Activated T-helper 1 cell treated with anti-CD3 and anti-CD28 coated beads, Interleukin-12 subunit alpha, Interleukin-12 subunit beta, Interleukin-2, Interleukin-4 antibody, amounts not matched to agents 30 ng/mL and 10 ng/mL and 1 ng/mL, durations not matched to agents 14 hours and 24 hours and 36 hours (primary cell): ENCODE measurements at regions of chr20 and their contacts with region 1.

Region 1: GRCh38 chr20:62121776-62122631 is at the start of gene LSM14B:
- DNase-seq: peak; percentile 95
- H3K4me3 Mint-ChIP-seq: peak within 1 kb of the TSS; percentile 90
- H3K27ac Mint-ChIP-seq: peak within 1 kb of the TSS; percentile 94
- H3K4me1 Mint-ChIP-seq: peaks cover 32% of the 10 kb centered on the region
- H3K27me3 Mint-ChIP-seq: no peaks in the 10 kb centered on the region
- total RNA-seq, gene LSM14B: 39.6 and 43.2 TPM in 2 replicates

Region 2: DNA sequence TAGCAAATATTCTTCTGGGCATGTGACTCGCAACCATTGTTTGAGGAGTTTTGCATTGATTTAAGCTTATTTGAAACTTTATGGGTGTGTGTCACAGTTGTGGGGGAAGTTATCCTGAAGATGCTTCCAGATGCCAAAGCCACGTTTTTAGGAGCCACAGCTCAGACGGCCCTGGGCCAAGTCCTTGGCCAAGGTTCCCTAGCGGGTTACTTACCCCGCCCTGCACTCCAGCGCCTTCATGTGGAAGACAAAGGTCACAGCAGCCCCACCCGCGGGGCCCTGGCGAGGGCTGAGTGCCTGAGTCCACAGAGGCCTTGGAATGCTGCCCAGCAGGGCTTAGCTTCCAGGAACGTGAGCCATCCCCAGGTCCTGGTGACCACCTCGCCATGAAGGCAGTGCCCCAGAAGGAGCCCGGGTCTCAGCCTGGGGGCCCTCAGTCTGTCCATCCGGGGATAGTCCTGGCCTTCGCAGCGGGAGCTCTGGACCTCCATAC is 561.6 kb before region 1 on chr20:
- intact Hi-C with region 1: no loop called
- DNase-seq: no peak
- H3K4me3 Mint-ChIP-seq: no peak overlapping the region
- H3K27ac Mint-ChIP-seq: no peak overlapping the region
- H3K4me1 Mint-ChIP-seq: no peaks in the 10 kb centered on the region
- H3K27me3 Mint-ChIP-seq: no peaks in the 10 kb centered on the region

Region 3: DNA sequence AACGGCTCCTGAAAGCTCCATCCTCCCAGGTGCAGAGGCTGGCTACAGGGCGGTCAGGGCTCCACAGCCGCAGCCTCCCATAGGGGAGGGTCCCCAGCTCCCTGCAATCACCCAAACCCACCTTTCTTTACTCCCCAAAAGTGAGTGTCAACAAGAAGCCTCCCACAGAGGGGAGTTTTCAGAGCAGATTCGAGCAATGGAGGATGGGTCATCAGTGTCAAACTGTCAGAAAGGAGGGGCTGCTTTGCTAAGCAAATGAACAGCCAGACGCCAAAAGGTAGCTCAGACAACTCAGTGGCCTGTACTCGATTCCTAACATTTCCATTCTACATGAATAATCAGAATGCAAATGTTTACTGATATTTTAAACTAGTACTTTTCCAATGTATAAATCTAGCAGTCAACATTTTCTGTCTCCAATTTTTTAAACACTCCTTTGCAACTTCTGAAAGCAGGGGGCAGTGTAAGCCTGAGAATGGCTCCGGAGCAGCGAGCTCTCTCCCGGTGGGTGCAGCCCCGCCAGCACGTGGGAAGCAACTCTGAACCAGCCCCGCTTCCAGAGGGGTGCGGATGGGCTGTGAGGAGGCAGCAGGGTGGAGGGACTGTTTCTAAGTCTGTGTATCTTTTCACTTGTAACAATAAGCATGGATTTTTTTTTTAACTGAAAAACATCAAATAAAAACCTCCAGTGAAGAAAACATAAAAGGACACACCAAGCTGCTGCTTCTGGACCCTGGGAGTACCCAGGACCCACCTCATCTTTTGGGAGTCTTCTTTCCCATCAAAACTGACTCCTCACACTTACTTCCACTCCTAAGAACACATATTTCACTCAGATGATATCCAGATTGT is 111.2 kb before region 1 on chr20:
- intact Hi-C with region 1: loop called (anchors 1 kb)
- DNase-seq: peak; percentile 34
- H3K4me3 Mint-ChIP-seq: no peak overlapping the region
- H3K27ac Mint-ChIP-seq: no peak overlapping the region
- H3K4me1 Mint-ChIP-seq: peaks cover 8% of the 10 kb centered on the region
- H3K27me3 Mint-ChIP-seq: no peaks in the 10 kb centered on the region

Region 4: DNA sequence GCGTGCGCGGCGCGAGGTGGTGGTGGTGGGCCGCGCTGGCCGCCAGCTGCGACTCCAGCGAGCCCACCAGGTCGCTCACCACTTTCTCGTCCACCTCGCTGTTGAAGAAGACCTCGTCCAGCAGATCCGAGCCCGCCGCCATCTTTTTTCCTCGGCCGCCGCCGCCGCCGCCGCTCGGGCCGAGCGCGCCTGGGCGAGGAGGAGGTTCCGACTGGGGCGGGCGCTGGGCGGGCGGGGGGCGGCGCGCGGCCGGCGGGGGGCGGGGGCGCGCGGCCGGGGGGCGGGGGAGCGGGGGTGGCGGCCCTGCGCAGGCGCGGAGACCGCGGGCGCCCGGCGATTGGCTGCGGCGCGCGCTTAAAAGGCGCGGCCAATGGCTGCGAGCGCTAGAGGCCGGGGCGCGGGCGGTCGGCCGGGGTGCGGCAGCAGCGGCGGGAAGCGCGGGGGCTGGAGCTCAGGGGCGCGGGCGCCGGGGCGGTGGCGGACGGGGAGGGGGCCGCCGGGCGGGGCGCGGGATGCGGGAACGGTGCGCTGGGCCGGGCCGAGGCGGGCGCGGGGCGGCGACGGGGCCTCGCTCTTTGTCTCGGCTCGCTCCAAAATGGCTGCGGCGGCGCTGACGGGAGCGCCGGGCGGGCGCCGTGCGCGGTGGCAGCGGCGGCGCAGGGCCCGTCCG is 56.2 kb before region 1 on chr20 and contains the start of gene TAF4:
- intact Hi-C with region 1: loop called (anchors 1 kb)
- DNase-seq: peak; percentile 80
- H3K4me3 Mint-ChIP-seq: peak within 1 kb of the TSS; percentile 84
- H3K27ac Mint-ChIP-seq: peak within 1 kb of the TSS; percentile 84
- H3K4me1 Mint-ChIP-seq: peaks cover 42% of the 10 kb centered on the region
- H3K27me3 Mint-ChIP-seq: peaks cover 6% of the 10 kb centered on the region
- total RNA-seq, gene TAF4: 26.3 and 28.3 TPM in 2 replicates

Region 5: DNA sequence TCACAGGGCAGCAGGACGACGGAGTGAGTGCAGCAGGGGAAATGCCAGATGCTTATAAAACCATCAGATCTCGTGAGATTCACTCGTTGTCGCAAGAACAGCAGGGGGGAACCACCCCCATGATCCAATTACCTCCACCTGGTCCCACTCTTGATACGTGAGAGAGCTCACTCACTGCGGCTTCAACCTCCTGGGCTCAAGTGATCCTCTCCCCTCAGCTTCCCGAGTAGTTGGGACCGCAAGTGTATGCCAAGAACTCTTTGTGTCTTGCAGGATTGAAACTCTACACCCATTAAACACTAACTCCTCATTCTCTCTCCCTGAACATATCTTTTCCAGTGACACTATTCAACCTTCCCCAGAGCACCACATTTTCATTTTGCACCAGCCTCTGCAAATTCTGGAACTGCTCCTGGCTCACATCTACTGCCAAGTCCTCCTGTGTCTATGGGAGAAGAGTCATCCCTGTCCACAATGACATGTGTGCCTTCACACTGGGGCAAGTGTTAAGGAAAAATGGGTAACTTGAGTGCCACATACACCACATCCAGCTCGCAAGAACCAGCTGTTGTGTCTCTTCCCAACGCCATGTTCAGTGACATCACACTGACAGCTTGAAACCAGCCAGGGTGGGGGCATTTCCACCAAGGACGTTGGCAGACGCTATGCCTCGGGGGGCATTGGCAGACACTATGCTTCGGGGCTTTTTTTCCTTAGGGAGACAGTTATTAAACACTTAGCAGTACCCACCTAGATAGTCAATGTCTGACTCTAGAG is 41.6 kb before region 1 on chr20:
- intact Hi-C with region 1: no loop called
- DNase-seq: no peak
- H3K4me3 Mint-ChIP-seq: no peak overlapping the region
- H3K27ac Mint-ChIP-seq: no peak overlapping the region
- H3K4me1 Mint-ChIP-seq: no peaks in the 10 kb centered on the region
- H3K27me3 Mint-ChIP-seq: no peaks in the 10 kb centered on the region

Region 6: DNA sequence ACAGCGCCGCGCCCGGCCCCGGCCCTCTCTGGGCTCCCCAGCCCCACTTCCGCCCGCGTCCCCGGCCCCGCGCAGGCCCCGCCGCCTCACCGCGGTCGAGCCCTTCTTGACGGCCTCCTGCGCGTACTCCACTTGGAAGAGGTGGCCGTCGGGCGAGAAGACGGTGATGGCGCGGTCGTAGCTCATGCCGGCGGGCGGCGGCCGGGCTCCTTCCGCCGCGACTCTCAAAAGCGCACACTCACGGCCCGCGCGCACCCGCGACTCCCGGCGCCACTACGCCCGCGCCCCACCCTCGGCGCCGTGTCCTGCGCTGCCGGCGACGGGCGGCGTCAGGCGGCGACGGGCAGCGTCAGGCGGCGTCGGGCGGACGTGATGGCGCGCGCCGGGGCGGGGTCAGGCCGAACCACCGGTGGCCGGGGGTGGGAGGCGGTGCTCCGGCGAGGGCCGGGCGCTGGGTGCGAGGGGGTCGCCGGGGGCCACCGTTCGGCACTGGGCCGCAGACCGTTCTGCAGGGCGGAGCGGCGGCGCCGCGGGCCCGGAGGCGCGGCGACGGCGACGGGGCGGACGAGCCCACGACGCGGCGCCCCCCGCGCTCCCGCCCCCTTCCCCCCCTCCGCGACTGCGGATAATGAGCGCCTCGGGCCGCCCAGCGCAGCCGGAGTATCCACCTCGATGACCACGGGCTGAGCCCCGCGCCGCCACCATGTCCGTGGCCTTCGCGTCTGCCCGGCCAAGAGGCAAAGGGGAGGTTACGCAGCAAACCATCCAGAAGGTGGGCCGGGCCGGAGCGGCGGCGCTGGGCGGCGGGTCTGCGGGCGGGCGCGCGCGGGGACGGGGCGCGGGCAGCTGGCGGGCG is 21.3 kb after region 1 on chr20 and contains the starts of genes PSMA7 and SS18L1:
- intact Hi-C with region 1: loop called (anchors 1 kb)
- DNase-seq: peak; percentile 84
- H3K4me3 Mint-ChIP-seq: peak within 1 kb of the TSS; percentile 90
- H3K27ac Mint-ChIP-seq: peak within 1 kb of the TSS; percentile 91
- H3K4me1 Mint-ChIP-seq: peaks cover 39% of the 10 kb centered on the region
- H3K27me3 Mint-ChIP-seq: no peaks in the 10 kb centered on the region
- total RNA-seq, gene PSMA7: 444 and 450 TPM in 2 replicates
- total RNA-seq, gene SS18L1: 24.3 and 29.4 TPM in 2 replicates

Region 7: DNA sequence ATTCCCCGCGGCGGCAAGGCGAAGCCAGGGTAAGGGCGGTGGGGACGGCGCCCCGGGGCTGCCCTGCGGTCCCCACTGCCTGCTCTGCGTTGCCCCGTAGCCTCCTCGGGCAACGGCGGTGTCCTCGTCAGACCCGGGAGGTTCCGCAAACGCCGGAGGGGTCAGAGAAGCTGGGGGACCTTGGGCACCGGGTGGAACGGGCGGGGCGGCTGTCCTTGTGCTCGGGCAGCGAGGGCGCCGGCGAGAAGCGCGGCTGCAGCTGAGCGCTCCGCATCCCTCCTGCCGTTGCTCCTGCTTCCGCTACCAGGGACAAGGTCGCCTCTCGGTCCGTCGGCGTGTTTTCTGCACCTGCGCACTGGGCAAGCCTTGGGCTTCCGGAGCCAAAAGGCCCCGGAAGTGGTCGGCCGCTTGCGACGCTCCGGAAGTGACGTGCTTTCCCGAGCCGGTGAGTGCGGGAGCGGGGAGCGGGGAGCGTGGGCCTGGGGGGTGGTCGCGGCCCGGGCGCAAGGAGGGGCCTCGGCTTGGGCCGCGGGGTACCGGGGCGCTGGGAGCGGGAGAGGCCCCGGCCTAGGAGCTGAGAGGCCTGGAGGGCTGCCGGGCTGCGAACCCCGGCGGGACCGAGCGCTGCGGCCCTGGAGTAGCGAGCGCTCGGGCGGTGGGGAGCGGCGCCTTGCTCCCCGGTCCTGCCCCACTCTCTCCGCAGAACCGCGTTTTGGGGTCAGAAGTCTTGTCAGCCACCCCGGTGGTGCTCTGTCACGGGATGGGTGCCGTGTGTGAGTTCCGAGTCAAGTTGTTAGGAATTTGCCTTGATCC is 60.8 kb after region 1 on chr20 and contains the start of gene MTG2:
- intact Hi-C with region 1: loop called (anchors 1 kb)
- DNase-seq: peak; percentile 95
- H3K4me3 Mint-ChIP-seq: peak within 1 kb of the TSS; percentile 92
- H3K27ac Mint-ChIP-seq: peak within 1 kb of the TSS; percentile 93
- H3K4me1 Mint-ChIP-seq: peaks cover 39% of the 10 kb centered on the region
- H3K27me3 Mint-ChIP-seq: no peaks in the 10 kb centered on the region
- total RNA-seq, gene MTG2: 45.4 and 46.3 TPM in 2 replicates

Region 8: GRCh38 chr20:62232196-62233045 is 110.4 kb after region 1 on chr20:
- intact Hi-C with region 1: no loop called
- DNase-seq: no peak
- H3K4me3 Mint-ChIP-seq: no peak overlapping the region
- H3K27ac Mint-ChIP-seq: no peak overlapping the region
- H3K4me1 Mint-ChIP-seq: no peaks in the 10 kb centered on the region
- H3K27me3 Mint-ChIP-seq: no peaks in the 10 kb centered on the region

Region 9: DNA sequence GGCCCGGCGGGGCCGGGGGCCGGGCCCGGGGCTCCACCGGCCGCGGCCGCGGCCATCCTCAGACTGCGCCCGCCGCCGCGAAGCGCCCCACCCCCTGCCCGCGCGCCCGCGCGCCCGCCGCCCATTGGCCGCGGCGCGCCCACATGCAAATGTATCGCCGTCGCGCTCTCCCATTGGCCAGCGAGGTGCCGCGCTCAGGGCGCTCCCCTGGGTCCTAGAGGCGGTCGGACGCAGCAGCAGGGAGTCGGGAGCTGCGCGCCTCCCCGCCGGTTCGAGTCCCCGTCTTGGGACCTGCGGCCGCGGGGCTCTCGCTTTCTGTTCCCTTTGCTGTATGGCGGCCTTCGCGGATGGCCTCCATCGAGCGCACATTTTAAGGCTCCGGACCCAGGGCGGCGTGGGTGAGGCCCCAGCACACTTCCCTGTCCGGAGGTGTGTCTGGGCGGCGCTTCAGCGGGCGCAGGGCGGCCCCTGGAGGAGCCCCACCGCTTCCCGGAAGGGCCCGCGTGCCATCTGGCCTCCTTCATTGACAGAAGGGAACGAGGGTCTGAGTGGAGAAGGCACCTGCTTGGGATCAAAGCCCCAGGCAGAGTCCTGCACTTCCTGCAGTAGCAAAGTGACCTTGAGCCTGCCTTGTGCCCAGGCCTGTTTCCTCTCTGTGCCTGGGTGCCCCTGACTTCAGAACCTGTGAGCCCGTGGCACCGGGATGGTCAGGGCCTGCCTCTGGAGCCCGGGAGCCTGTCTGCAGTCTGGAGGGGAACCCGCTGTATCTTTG is 285.4 kb after region 1 on chr20 and contains the start of gene CABLES2:
- intact Hi-C with region 1: loop called (anchors 5 kb)
- DNase-seq: peak; percentile 90
- H3K4me3 Mint-ChIP-seq: peak within 1 kb of the TSS; percentile 85
- H3K27ac Mint-ChIP-seq: peak within 1 kb of the TSS; percentile 87
- H3K4me1 Mint-ChIP-seq: peaks cover 10% of the 10 kb centered on the region
- H3K27me3 Mint-ChIP-seq: no peaks in the 10 kb centered on the region
- total RNA-seq, gene CABLES2: 12.9 and 15.7 TPM in 2 replicates